Activated B cell treated with CpG ODN at 0.5 μM for 24 hours (primary cell): ENCODE measurements at regions of chr12 and their contacts with region 1.

Region 1: DNA sequence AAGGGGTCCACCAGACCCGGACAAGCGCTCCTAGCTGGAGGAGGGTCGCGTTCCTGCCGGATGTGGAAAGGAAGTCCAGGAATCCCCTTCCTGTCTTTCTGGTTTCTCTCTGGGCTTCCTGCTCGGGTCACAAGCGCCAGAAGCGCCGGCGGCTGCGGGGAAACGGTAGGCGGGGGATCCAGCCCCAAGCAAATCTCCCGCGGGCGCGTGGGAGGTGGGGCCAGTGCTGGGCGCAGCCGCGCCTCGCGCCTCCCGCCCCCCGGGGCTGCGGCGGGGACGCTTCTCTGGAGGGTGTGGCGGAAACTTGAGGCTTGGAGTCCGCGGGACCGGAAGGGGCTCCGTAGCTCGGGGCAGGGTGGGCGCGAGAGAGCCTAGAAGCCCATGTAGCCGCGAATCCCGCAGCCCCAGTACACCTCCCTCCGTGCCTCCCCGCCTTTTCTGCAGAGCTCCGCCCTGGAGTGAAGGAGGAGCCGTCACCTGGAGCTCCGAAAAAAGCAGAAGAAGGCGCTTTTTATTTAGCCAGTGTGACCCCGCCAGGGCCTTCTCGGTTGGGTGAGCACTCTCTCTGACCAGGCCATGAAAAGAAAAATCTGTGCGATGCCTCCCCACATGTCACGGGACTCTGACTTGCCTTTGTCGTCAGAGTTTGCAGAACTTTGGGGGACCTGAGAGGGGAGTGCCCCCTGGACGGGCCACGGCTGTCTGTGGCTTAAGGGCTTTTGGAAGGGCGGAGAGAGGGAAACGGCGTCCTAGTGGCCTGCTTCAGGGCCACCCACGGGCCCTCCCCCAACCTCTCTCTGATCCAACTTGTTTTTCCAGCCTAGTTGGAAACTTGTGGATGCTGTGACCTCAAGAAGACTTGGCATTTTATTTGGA is 21.4 kb upstream of the CLEC2D start:
- DNase-seq: peak; percentile 88
- ATAC-seq: peak; percentile 74
- H3K4me3 Mint-ChIP-seq: peak overlapping the region; percentile 89
- H3K27ac Mint-ChIP-seq: peak overlapping the region; percentile 98
- H3K4me1 Mint-ChIP-seq: peaks cover 68% of the 10 kb centered on the region
- H3K27me3 Mint-ChIP-seq: no peaks in the 10 kb centered on the region
- CTCF ChIP-seq: no peak

Region 2: GRCh38 chr12:9662500-9662899 is 14.4 kb after region 1 on chr12:
- CTCF ChIA-PET with region 1: interaction called, 6 read pairs
- POLR2A ChIA-PET with region 1: interaction called, 833 read pairs
- intact Hi-C with region 1: no loop called
- DNase-seq: no peak
- ATAC-seq: no peak
- H3K4me3 Mint-ChIP-seq: no peak overlapping the region
- H3K27ac Mint-ChIP-seq: peak overlapping the region; percentile 35
- H3K4me1 Mint-ChIP-seq: peaks cover 66% of the 10 kb centered on the region
- H3K27me3 Mint-ChIP-seq: no peaks in the 10 kb centered on the region
- CTCF ChIP-seq: no peak

Region 3: GRCh38 chr12:9687228-9687627 is 39.2 kb after region 1 on chr12:
- CTCF ChIA-PET with region 1: interaction called, 3 read pairs
- POLR2A ChIA-PET with region 1: interaction called, 30 read pairs
- intact Hi-C with region 1: loop called (anchors 5 kb)
- DNase-seq: no peak
- ATAC-seq: peak; percentile 29
- H3K4me3 Mint-ChIP-seq: no peak overlapping the region
- H3K27ac Mint-ChIP-seq: no peak overlapping the region
- H3K4me1 Mint-ChIP-seq: peaks cover 61% of the 10 kb centered on the region
- H3K27me3 Mint-ChIP-seq: no peaks in the 10 kb centered on the region
- CTCF ChIP-seq: no peak

Region 4: GRCh38 chr12:9707864-9708808 is 60.1 kb after region 1 on chr12:
- CTCF ChIA-PET with region 1: interaction called, 8 read pairs
- POLR2A ChIA-PET with region 1: interaction called, 44 read pairs
- intact Hi-C with region 1: loop called (anchors 1 kb)
- DNase-seq: no peak
- ATAC-seq: peak; percentile 50
- H3K4me3 Mint-ChIP-seq: peak overlapping the region; percentile 59
- H3K27ac Mint-ChIP-seq: peak overlapping the region; percentile 93
- H3K4me1 Mint-ChIP-seq: peaks cover 89% of the 10 kb centered on the region
- H3K27me3 Mint-ChIP-seq: no peaks in the 10 kb centered on the region
- CTCF ChIP-seq: peak; percentile 23

Region 5: DNA sequence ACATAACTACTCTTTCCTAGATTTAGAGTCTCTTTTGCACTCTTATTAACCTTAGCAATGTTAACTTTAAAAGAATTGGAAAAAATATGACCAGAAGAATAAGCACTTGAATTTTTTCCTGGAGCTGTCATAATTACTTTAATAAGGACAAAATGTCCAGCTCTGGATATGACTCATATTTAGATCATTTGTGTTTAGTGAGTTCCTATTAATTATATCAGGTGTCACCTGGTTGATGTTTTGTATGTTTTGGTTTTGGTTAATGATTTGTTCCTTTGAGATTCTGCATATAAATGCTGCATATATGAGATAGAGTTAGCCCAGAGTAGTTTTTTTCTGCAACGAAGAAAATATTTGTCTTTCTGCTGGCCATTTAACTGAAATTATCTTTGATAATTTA is 79.8 kb after region 1 on chr12:
- CTCF ChIA-PET with region 1: interaction called, 7 read pairs
- POLR2A ChIA-PET with region 1: interaction called, 104 read pairs
- intact Hi-C with region 1: loop called (anchors 1 kb)
- DNase-seq: no peak
- ATAC-seq: no peak
- H3K4me3 Mint-ChIP-seq: peak overlapping the region; percentile 64
- H3K27ac Mint-ChIP-seq: peak overlapping the region; percentile 77
- H3K4me1 Mint-ChIP-seq: peaks cover 85% of the 10 kb centered on the region
- H3K27me3 Mint-ChIP-seq: no peaks in the 10 kb centered on the region
- CTCF ChIP-seq: no peak

Region 6: GRCh38 chr12:9741726-9742125 is 93.7 kb after region 1 on chr12:
- CTCF ChIA-PET with region 1: interaction called, 7 read pairs
- POLR2A ChIA-PET with region 1: interaction called, 42 read pairs
- intact Hi-C with region 1: loop called (anchors 1 kb)
- DNase-seq: no peak
- ATAC-seq: peak; percentile 56
- H3K4me3 Mint-ChIP-seq: peak overlapping the region; percentile 75
- H3K27ac Mint-ChIP-seq: peak overlapping the region; percentile 94
- H3K4me1 Mint-ChIP-seq: peaks cover 72% of the 10 kb centered on the region
- H3K27me3 Mint-ChIP-seq: no peaks in the 10 kb centered on the region
- CTCF ChIP-seq: no peak

Region 7: DNA sequence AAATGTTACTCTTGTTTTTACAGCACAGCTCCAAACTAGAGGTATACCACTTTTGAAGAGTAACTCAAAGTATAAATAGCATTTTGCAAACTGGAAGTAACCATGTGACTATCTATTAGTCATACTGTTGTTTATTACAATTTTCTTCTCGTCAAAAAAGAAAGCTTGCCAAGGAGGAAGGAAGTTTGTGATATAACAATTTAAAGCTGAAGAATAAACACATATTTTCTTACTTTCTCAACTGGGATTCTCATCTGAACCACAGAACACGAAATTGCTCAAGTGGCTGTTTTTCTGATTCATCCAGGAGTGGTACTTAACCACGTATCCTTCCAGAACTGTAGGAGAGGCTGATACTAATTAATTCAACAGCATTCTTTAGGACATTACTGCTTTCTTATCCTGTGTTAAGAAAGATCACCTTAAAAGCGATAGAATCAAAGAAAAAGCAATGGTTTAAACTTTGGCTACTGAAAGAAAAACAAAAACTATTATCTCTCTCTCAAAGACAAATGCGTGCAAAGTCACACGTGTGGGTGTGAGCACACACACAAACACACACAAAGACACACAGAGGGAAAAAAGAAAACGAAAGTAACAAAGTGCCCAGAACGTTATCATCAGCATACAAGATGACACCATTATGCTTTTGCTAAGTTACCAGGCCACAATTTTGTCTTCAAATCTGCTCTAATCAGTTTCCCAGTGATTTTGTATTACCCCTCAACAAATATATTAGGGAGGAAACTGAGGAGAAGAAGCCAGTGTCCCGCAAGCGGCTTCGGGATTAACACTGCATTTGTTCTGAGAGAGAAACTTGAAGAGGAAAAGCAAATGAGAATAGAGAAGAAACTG is 221.5 kb after region 1 on chr12 and contains the start of gene CLEC2B:
- CTCF ChIA-PET with region 1: no interaction called
- POLR2A ChIA-PET with region 1: interaction called, 15 read pairs
- intact Hi-C with region 1: loop called (anchors 5 kb)
- DNase-seq: no peak
- ATAC-seq: peak; percentile 63
- H3K4me3 Mint-ChIP-seq: peak within 1 kb of the TSS; percentile 95
- H3K27ac Mint-ChIP-seq: peak within 1 kb of the TSS; percentile 98
- H3K4me1 Mint-ChIP-seq: peaks cover 37% of the 10 kb centered on the region
- H3K27me3 Mint-ChIP-seq: peaks cover 2% of the 10 kb centered on the region
- CTCF ChIP-seq: no peak
- total RNA-seq, gene CLEC2B: 18.4 and 19.1 TPM in 2 replicates